ENCODE measurements at regions of chr7 and their contacts with region 1.

Region 1: DNA sequence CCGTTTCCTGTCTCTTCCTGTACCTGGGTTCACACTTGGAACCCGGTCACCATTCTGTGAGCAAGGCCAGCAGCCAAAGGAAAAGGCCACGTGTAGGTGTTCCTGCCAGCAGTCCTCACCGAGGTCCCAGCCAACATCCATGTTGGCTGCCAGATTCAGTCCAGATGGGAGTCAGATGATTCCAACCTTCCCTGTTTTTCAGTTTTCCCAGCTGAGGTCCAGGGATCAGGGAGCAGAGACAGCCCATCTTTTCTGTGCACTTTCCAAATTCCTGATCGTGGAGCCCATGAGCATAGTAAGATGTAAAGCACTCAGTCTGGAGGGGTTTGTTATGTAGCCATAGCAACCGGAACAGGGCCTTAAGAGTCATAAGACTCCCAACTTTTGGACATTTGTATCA is 3.9 kb upstream of the PVRIG start:
- DNase-seq: no peak
- ATAC-seq: no peak
- H3K4me3 ChIP-seq: no peak overlapping the region
- H3K27ac ChIP-seq: no peak overlapping the region
- H3K4me1 ChIP-seq: peaks cover 34% of the 10 kb centered on the region
- H3K27me3 ChIP-seq: no peaks in the 10 kb centered on the region
- CTCF ChIP-seq: no peak
- EP300 ChIP-seq: no peak
- POLR2A ChIP-seq: no peak
- RAD21 ChIP-seq: no peak

Region 2: DNA sequence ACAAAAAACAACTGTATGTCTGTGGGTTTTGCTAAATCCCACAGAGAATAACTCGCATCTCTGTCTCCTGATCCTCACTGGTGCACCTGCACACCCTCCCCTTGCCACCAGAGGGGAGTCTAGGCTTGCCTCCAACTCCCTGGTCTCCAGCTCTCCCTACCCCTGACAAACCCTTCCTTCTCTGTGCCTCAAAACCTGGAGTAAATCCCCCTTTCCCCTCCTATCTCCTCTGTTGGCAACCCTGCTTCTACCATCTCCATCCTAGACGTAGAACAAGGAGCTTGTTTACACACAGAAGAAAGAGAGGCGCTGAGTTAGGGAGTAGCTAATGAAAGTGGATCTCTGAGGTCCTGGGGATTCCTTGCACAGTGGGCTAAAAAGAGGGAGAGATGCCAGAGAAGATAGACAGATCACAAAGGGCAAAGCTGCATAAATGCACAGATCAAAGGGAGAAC is 83.2 kb before region 1 on chr7:
- CTCF ChIA-PET with region 1: interaction called, 17 read pairs
- POLR2A ChIA-PET with region 1: interaction called, 4 read pairs
- in situ Hi-C with region 1: loop called (anchors 5 kb)
- intact Hi-C with region 1: loop called (anchors 2 kb)
- DNase-seq: peak; percentile 57
- ATAC-seq: peak; percentile 83
- H3K4me3 ChIP-seq: no peak overlapping the region
- H3K27ac ChIP-seq: no peak overlapping the region
- H3K4me1 ChIP-seq: peaks cover 31% of the 10 kb centered on the region
- H3K27me3 ChIP-seq: no peaks in the 10 kb centered on the region
- CTCF ChIP-seq: peak; percentile 94
- EP300 ChIP-seq: no peak
- POLR2A ChIP-seq: no peak
- RAD21 ChIP-seq: peak; percentile 82

Region 3: GRCh38 chr7:100200693-100201092 is 15.2 kb before region 1 on chr7:
- CTCF ChIA-PET with region 1: no interaction called
- POLR2A ChIA-PET with region 1: no interaction called
- in situ Hi-C with region 1: no loop called
- intact Hi-C with region 1: no loop called
- DNase-seq: peak; percentile 17
- ATAC-seq: peak; percentile 69
- H3K4me3 ChIP-seq: no peak overlapping the region
- H3K27ac ChIP-seq: no peak overlapping the region
- H3K4me1 ChIP-seq: peaks cover 13% of the 10 kb centered on the region
- H3K27me3 ChIP-seq: no peaks in the 10 kb centered on the region
- CTCF ChIP-seq: no peak
- EP300 ChIP-seq: no peak
- POLR2A ChIP-seq: no peak
- RAD21 ChIP-seq: no peak